Naive thymus-derived CD4-positive, alpha-beta T cell (primary cell): ENCODE measurements at regions of chr7 and their contacts with region 1.

Region 1: DNA sequence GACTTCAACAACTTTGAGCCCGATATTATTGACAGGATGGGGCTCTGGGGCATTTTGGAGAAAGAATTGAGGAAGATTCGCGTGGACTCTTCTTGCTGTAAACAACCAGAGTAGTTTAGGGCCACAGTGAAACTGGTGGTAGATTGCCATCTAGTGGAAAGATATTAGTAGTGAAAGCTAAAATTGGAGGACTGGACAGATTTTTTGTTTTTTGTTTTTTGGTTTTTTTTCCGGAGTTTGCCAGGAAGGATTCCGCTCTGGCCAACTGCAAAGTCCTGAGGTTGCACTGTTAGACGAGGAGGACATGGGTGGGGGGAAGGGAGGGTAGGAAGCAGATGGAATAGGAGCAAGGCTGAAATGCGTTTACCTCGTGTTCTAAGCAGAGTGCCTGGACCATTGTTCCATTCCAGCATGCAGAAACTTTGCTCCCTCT is 11.7 kb downstream of the NOBOX start:
- DNase-seq: peak in 7 of 9 donors; percentile 35 to 66 (median 59)
- ATAC-seq: peak; percentile 82
- H3K4me3 ChIP-seq: no peak overlapping the region
- H3K4me3 Mint-ChIP-seq: peak overlapping the region; percentile 1 to 80 (median 51)
- H3K27ac ChIP-seq: no peak overlapping the region
- H3K27ac Mint-ChIP-seq: peak overlapping the region in 2 of 9 donors; percentile 1 to 4
- H3K4me1 ChIP-seq: no peaks in the 10 kb centered on the region
- H3K4me1 Mint-ChIP-seq: peaks cover 0 to 11% (median 5%) of the 10 kb centered on the region in 7 donors
- H3K27me3 ChIP-seq: no peaks in the 10 kb centered on the region
- H3K27me3 Mint-ChIP-seq: peaks cover 0 to 4% (median 0%) of the 10 kb centered on the region in 5 donors

Region 2: DNA sequence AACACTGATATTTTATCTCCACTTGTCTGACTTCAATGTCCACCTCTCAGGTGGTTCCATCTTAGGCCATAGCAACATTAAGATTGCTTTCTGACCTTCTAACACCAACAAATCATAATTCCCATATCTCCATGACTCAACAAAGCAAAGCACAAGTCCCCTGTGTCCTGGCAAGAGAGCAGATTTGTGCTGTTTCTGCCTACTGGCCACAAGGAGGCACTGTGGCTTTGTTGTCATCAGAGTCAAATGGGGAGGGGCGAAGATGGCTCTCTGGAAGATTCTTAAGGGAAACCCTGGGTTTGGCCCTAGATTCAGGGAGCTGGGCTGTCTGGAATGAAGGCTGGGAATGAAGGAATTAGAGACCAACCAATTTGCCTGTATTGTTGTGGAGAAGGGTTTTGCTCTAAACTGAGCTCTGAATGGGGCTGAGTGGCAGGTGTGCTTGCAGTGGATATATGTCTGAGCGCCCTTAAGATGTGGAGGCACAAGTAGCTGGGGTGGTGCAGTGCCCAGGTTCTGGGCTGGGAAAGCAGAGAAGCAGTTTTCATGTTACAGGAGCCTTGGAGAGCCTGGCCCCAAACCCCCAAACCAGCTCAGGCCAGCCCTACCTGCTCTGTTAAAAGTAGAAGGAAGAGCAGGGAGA is 1979.2 kb before region 1 on chr7:
- CTCF ChIA-PET with region 1: no interaction called
- POLR2A ChIA-PET with region 1: no interaction called
- intact Hi-C with region 1: no loop called
- DNase-seq: peak in 8 of 9 donors; percentile 19 to 58 (median 38)
- ATAC-seq: peak; percentile 88
- H3K4me3 ChIP-seq: no peak overlapping the region
- H3K4me3 Mint-ChIP-seq: peak overlapping the region in 6 of 10 donors; percentile 8 to 56 (median 26)
- H3K27ac ChIP-seq: no peak overlapping the region
- H3K27ac Mint-ChIP-seq: peak overlapping the region in 3 of 9 donors; percentile 3 to 69 (median 6)
- H3K4me1 ChIP-seq: peaks cover 0 to 3% of the 10 kb centered on the region in 2 donors
- H3K4me1 Mint-ChIP-seq: peaks cover 4 to 7% (median 6%) of the 10 kb centered on the region in 7 donors
- H3K27me3 ChIP-seq: no peaks in the 10 kb centered on the region
- H3K27me3 Mint-ChIP-seq: peaks cover 0 to 19% (median 0%) of the 10 kb centered on the region in 5 donors

Region 3: DNA sequence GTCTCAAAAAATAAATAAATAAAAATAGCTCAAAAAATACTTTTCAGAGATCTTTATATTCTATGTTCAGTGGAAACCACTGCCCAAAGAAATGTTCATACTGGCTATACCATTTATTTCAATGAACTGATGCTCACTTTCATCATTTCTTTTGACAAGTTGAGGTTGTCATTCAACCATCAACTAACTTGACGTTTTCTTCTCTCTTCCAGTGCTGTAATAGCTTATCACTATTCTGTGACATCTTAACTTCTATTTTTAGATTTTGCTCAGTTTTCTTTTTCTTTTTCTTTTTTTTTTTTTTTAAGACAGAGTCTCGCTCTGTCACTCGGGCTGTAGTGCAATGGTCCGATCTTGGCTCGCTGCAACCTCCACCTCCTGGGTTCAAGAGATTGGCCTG is 217.2 kb before region 1 on chr7:
- CTCF ChIA-PET with region 1: no interaction called
- POLR2A ChIA-PET with region 1: no interaction called
- intact Hi-C with region 1: loop called (anchors 5 to 10 kb)
- DNase-seq: no peak
- ATAC-seq: no peak
- H3K4me3 ChIP-seq: no peak overlapping the region
- H3K4me3 Mint-ChIP-seq: no peak overlapping the region
- H3K27ac ChIP-seq: no peak overlapping the region
- H3K27ac Mint-ChIP-seq: no peak overlapping the region
- H3K4me1 ChIP-seq: no peaks in the 10 kb centered on the region
- H3K4me1 Mint-ChIP-seq: peaks cover 0 to 5% (median 0%) of the 10 kb centered on the region in 7 donors
- H3K27me3 ChIP-seq: no peaks in the 10 kb centered on the region
- H3K27me3 Mint-ChIP-seq: peaks cover 0 to 27% (median 5%) of the 10 kb centered on the region in 5 donors

Region 4: DNA sequence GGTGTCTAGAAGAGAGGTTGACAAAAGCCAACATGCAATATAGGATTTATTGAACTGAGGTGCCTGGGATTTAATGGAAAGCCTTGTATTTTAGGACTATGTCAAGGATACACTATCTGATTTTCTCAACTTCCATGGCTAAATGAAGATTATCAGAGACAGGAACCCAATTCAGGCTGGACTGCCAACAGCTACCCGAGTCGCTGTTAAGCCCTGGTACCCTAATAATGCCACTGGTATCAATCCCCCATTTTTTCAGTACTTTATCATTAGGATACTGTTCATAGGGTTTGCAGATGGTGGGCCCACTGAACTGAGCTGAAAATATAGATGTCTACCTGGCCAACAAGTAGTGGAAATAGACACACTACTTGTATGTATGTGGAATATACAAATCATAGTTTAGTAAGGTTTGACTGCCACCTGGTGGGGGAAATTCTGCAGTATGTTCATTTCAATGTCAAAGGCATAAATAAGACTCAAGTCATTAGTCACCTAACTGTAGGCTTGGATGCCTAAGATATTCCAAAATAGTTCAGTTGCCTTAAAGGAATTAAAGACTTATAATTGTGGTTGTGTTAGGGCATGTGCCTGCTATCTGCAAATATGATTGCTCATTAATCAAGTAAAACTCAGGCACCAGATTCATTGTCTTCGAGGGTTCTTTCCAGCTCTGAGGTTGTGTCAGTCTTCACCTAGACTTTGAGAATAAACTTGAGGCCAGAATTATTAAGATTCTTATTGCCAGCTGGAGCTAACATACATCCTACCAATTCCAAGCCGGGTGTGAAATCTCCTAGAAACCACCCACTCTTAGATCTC is 45.7 kb after region 1 on chr7:
- CTCF ChIA-PET with region 1: interaction called, 4 read pairs
- POLR2A ChIA-PET with region 1: no interaction called
- intact Hi-C with region 1: loop called in 1 of 2 experiments (anchors 1 kb)
- DNase-seq: peak in 8 of 9 donors; percentile 16 to 49 (median 34)
- ATAC-seq: no peak
- H3K4me3 ChIP-seq: no peak overlapping the region
- H3K4me3 Mint-ChIP-seq: no peak overlapping the region
- H3K27ac ChIP-seq: no peak overlapping the region
- H3K27ac Mint-ChIP-seq: no peak overlapping the region
- H3K4me1 ChIP-seq: no peaks in the 10 kb centered on the region
- H3K4me1 Mint-ChIP-seq: no peaks in the 10 kb centered on the region
- H3K27me3 ChIP-seq: no peaks in the 10 kb centered on the region
- H3K27me3 Mint-ChIP-seq: peaks cover 0 to 6% (median 2%) of the 10 kb centered on the region in 5 donors

Region 5: GRCh38 chr7:144474800-144475615 is 83.2 kb after region 1 on chr7:
- CTCF ChIA-PET with region 1: no interaction called
- POLR2A ChIA-PET with region 1: no interaction called
- intact Hi-C with region 1: no loop called
- DNase-seq: no peak
- ATAC-seq: no peak
- H3K4me3 ChIP-seq: no peak overlapping the region
- H3K4me3 Mint-ChIP-seq: no peak overlapping the region
- H3K27ac ChIP-seq: no peak overlapping the region
- H3K27ac Mint-ChIP-seq: no peak overlapping the region
- H3K4me1 ChIP-seq: no peaks in the 10 kb centered on the region
- H3K4me1 Mint-ChIP-seq: no peaks in the 10 kb centered on the region
- H3K27me3 ChIP-seq: no peaks in the 10 kb centered on the region
- H3K27me3 Mint-ChIP-seq: no peaks in the 10 kb centered on the region

Region 6: GRCh38 chr7:144545330-144545729 is 153.5 kb after region 1 on chr7:
- CTCF ChIA-PET with region 1: no interaction called
- POLR2A ChIA-PET with region 1: no interaction called
- intact Hi-C with region 1: no loop called
- DNase-seq: no peak
- ATAC-seq: no peak
- H3K4me3 ChIP-seq: no peak overlapping the region
- H3K4me3 Mint-ChIP-seq: no peak overlapping the region
- H3K27ac ChIP-seq: no peak overlapping the region
- H3K27ac Mint-ChIP-seq: no peak overlapping the region
- H3K4me1 ChIP-seq: no peaks in the 10 kb centered on the region
- H3K4me1 Mint-ChIP-seq: peaks cover 0 to 5% (median 0%) of the 10 kb centered on the region in 7 donors
- H3K27me3 ChIP-seq: no peaks in the 10 kb centered on the region
- H3K27me3 Mint-ChIP-seq: no peaks in the 10 kb centered on the region